Heart right ventricle (tissue), 16 donors: ENCODE measurements at regions of chr3 and their contacts with region 1.

Region 1: DNA sequence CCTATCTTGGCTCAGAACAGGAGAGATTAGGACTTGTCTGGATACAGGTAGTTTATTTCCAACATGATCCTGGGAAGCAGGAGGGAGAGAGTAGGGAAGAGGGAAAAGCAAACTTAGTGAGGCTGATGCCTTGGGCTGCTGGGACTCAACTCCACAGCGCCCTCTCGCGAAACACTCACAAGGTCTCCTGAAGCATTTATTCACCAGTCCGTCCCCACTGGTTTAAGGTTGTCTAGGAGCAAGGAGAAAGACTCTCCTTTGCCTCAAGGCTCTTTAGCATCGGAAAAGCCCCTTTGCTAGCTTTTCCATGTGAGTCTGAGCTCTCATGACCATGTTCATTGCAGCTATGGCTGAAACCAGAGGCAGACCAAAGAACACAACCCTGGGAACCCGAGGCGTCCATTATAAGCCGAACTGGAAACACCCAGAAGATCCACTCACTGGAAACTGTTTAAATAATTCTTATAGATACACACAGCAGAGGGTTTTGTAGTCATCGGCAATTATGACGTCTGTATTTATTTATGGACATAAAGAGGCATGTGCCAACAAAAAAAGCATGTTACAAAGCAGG is 244.5 kb downstream of the CD47 start:
- DNase-seq: peak; percentile 57 to 70
- ATAC-seq: peak; percentile 51 to 88 (median 72)
- H3K4me3 ChIP-seq: no peak overlapping the region
- H3K27ac ChIP-seq: no peak overlapping the region
- H3K4me1 ChIP-seq: peaks cover 0 to 8% (median 0%) of the 10 kb centered on the region in 9 donors
- H3K27me3 ChIP-seq: no peaks in the 10 kb centered on the region
- CTCF ChIP-seq: peak in 8 of 9 donors; percentile 20 to 71 (median 64)

Region 2: GRCh38 chr3:107345822-107346405 is 500.5 kb before region 1 on chr3:
- intact Hi-C with region 1: no loop called
- DNase-seq: no peak
- ATAC-seq: no peak
- H3K4me3 ChIP-seq: no peak overlapping the region
- H3K27ac ChIP-seq: no peak overlapping the region
- H3K4me1 ChIP-seq: no peaks in the 10 kb centered on the region
- H3K27me3 ChIP-seq: no peaks in the 10 kb centered on the region
- CTCF ChIP-seq: no peak

Region 3: DNA sequence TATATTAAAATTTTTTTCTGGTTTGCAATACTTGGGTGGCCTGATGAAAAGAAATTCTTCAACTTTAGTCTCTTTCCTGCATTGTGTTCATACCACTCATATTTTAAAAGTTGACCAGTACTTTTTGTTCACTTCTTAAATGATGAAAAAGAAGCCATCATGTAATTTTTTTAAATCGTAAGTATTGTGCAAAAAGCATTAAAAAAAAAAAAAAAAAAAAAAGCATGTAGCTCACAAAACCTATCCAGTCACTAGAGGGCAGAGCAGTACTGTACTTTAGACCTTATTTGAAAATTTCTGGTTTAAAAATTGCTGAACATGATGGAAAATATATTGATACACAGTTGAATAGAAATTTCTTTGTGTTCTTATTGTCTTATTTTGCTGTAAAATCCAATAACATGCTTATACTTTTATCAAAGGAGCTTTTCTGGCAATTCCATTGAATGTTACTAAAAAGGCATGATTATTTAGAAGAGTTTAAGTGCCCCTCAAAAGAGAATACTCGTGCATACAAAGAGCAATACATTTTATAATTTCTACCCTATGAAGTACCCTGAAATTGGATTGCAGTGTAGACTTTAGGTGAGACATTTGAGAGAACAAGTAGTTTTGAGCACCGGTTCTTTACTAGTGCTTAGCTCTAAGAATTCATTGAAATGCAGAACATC is 185.9 kb before region 1 on chr3:
- intact Hi-C with region 1: loop called in 1 of 10 experiments (anchors 10 kb)
- DNase-seq: no peak
- ATAC-seq: no peak
- H3K4me3 ChIP-seq: no peak overlapping the region
- H3K27ac ChIP-seq: no peak overlapping the region
- H3K4me1 ChIP-seq: peaks cover 0 to 37% (median 25%) of the 10 kb centered on the region in 9 donors
- H3K27me3 ChIP-seq: no peaks in the 10 kb centered on the region
- CTCF ChIP-seq: peak; percentile 9 to 73 (median 62)

Region 4: DNA sequence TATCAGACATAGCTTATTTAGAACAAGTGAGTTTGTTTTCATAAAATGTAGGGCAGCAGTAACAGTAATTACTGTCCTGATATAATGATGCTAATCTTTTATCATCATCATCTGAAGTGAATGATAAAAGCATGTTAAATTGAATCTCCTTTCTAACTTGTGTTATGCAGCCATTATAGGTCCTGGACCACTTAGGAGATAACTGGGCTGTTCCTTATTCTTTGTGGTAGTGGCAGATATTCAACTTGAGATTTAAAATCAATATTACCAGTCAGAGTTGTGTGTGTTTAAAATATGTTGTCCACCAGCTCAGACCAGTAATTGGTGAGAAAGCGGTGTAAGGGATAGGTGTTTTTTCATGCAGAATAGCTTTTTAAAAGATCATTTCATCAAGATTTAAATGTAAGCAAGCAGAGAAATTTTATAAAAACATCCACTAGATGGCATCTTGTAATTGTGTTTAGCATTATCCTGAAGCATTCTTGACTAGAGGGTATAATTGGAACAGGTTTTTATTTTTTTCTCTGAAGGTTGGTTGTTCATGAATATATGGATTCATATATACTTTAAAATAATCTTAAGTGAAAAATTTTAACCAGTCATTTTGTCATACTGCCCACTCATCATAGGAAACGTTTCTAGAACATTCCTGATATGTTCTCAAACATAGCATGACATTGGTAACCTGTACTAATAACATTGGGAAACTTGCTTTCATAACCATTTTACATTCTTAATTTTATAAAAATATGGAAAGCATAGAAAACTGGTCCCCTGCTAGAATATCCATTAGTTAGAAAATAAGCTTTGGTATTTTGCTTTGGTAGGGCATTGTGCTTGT is 169.7 kb before region 1 on chr3:
- intact Hi-C with region 1: loop called in 3 of 10 experiments (anchors 10 kb)
- DNase-seq: no peak
- ATAC-seq: peak in 3 of 8 donors; percentile 48 to 64 (median 53)
- H3K4me3 ChIP-seq: no peak overlapping the region
- H3K27ac ChIP-seq: no peak overlapping the region
- H3K4me1 ChIP-seq: peaks cover 0 to 39% (median 16%) of the 10 kb centered on the region in 9 donors
- H3K27me3 ChIP-seq: no peaks in the 10 kb centered on the region
- CTCF ChIP-seq: peak; percentile 22 to 74 (median 61)

Region 5: GRCh38 chr3:107753480-107753879 is 92.9 kb before region 1 on chr3:
- intact Hi-C with region 1: no loop called
- DNase-seq: no peak
- ATAC-seq: peak in 6 of 8 donors; percentile 42 to 79 (median 62)
- H3K4me3 ChIP-seq: no peak overlapping the region
- H3K27ac ChIP-seq: no peak overlapping the region
- H3K4me1 ChIP-seq: no peaks in the 10 kb centered on the region
- H3K27me3 ChIP-seq: no peaks in the 10 kb centered on the region
- CTCF ChIP-seq: peak in 7 of 9 donors; percentile 38 to 59 (median 48)